ENCODE measurements at regions of chr9 and their contacts with region 1.

Region 1: GRCh38 chr9:131393622-131394463 is at the start of gene PRRC2B:
- DNase-seq: peak; percentile 87
- H3K4me3 Mint-ChIP-seq: peak within 1 kb of the TSS; percentile 89
- H3K27ac Mint-ChIP-seq: peak within 1 kb of the TSS; percentile 93
- H3K4me1 Mint-ChIP-seq: peaks cover 43% of the 10 kb centered on the region
- H3K27me3 Mint-ChIP-seq: no peaks in the 10 kb centered on the region
- total RNA-seq, gene PRRC2B: 157 to 171 TPM

Region 2: GRCh38 chr9:129796029-129796910 is 1597.6 kb before region 1 on chr9:
- CTCF ChIA-PET with region 1: no interaction called
- intact Hi-C with region 1: no loop called
- DNase-seq: no peak
- H3K4me3 Mint-ChIP-seq: no peak overlapping the region
- H3K27ac Mint-ChIP-seq: no peak overlapping the region
- H3K4me1 Mint-ChIP-seq: no peaks in the 10 kb centered on the region
- H3K27me3 Mint-ChIP-seq: no peaks in the 10 kb centered on the region

Region 3: DNA sequence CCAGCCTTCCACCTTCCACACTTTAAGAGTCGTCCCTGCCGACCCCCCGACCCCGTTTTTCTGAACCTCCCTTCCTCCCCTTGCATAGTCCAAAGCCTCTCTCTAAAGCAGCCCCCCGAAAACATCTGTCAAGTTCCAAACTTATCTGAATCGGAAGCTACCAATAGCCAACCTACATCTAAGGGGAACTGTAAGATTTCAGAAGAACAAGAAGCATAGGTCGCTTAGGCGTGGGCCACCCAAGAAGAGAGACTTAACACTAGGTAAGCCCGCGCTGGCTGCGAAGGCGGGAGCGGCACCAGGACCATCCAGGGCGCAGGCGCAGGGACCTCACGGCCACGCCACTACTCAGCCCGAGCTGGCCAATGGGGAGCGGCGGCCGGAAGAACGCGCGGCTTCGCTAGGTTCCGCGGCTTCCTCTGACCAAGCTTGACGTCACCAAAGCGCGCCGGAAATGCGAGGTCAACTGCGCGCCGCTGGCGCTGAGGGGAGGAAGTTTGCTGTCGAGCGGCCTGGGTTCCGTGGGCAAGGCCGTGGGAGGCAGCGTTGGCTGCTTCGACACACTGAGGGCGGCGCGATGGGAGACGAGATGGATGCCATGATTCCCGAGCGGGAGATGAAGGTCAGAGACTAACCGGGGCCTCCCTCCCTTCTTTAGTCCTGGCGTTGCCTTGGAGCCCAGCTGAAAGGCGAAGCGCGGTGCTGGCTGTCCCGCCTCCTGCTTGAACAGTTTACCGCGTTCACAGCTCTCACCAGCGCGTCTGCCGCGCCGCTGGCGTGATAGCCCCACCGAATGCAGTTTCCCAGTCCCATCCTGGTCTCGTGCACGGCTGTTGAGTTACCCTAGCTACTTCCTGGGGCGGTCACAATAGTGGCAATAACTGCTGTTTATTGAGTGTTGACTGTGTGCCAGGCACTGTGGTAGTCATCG is 268.4 kb before region 1 on chr9 and contains the start of gene NUP214:
- CTCF ChIA-PET with region 1: no interaction called
- intact Hi-C with region 1: loop called (anchors 5 kb)
- DNase-seq: peak; percentile 100
- H3K4me3 Mint-ChIP-seq: peak within 1 kb of the TSS; percentile 96
- H3K27ac Mint-ChIP-seq: peak within 1 kb of the TSS; percentile 92
- H3K4me1 Mint-ChIP-seq: peaks cover 32% of the 10 kb centered on the region
- H3K27me3 Mint-ChIP-seq: no peaks in the 10 kb centered on the region
- total RNA-seq, gene NUP214: 40.2 to 41.1 TPM

Region 4: DNA sequence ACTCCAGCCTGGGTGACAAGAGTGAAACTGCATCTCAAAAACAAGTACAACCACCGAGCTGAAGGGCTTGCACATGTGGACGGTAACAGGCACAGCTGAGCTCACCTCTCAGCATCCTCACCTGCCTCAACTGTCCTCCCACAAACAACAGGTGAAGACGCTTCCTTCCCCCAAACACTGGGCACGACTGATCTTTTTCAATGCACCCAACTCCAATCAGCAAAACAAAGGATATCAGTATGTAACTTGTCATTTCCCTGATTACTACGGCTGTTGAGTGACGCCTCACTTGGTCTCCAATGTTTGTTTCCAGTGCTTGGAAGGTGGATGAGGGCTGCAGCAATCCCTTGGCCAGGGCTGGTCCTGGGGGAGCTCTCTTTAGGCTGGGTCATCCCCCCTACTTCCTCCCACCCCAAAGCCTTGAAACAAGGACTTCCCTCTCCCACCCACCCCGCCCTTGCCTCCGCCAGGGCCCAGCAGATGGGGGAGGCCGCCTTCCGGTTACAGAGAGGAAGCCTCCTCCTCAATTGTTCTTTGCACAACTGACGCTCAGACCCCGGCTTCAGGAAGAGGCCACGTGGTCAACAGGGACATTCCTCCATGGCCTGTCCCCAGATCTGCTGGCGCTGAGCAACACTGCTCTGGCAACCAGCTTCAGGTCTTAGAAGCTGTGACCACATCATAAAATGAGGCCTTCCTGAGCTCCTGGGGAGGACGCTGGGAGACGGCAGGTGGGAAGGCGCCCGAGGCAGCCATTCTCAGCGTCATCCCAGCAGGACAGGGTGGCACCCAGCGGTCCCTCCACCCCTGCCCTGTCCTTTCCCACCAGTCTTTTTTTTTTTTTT is 123.5 kb before region 1 on chr9:
- CTCF ChIA-PET with region 1: no interaction called
- intact Hi-C with region 1: loop called (anchors 5 kb)
- DNase-seq: peak; percentile 81
- H3K4me3 Mint-ChIP-seq: peak overlapping the region; percentile 96
- H3K27ac Mint-ChIP-seq: peak overlapping the region; percentile 99
- H3K4me1 Mint-ChIP-seq: peaks cover 56% of the 10 kb centered on the region
- H3K27me3 Mint-ChIP-seq: no peaks in the 10 kb centered on the region

Region 5: DNA sequence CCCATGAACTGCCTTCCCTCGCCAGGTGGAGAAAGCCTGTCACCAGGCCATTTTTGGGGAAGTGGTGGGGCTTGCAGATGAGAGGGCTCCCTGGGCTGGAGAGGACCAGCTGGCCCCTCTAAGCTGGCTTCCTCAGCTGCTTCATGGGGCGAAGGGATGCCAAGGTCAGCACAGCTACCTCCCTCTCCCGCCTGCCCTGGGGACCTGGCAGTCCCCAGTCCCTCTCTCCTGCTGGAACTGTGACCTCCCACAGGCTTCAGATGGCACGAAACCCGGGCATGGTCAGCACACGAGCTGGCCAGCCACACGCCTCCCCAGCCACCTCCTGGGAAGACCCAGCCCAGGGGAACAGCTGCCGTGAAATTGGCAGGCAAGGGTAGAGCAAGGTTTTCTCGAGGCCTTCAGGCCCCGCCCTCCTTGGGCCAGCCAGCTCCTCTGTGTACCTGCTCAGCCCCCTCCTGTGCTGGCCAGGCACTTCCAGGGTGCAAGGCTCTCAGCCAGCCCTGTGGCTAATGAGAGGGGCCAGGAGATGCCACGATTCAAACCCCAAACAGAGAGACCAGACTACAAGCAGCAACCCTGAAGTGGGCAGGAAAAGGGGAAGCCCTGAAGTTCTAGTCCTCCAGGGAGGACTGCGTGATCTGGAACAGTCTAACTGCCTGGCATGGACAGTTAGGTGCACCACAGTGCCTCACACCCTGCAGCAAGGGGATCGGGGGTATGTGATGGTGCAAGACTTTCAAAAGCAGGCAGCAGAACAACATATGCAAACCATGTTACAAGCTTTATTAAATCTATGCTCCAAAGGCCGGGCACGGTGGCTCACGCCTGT is 91.4 kb before region 1 on chr9:
- CTCF ChIA-PET with region 1: no interaction called
- intact Hi-C with region 1: no loop called
- DNase-seq: no peak
- H3K4me3 Mint-ChIP-seq: no peak overlapping the region
- H3K27ac Mint-ChIP-seq: no peak overlapping the region
- H3K4me1 Mint-ChIP-seq: no peaks in the 10 kb centered on the region
- H3K27me3 Mint-ChIP-seq: no peaks in the 10 kb centered on the region

Region 6: GRCh38 chr9:131468038-131468437 is 74.2 kb after region 1 on chr9:
- CTCF ChIA-PET with region 1: no interaction called
- intact Hi-C with region 1: no loop called
- DNase-seq: no peak
- H3K4me3 Mint-ChIP-seq: no peak overlapping the region
- H3K27ac Mint-ChIP-seq: no peak overlapping the region
- H3K4me1 Mint-ChIP-seq: no peaks in the 10 kb centered on the region
- H3K27me3 Mint-ChIP-seq: no peaks in the 10 kb centered on the region

Region 7: DNA sequence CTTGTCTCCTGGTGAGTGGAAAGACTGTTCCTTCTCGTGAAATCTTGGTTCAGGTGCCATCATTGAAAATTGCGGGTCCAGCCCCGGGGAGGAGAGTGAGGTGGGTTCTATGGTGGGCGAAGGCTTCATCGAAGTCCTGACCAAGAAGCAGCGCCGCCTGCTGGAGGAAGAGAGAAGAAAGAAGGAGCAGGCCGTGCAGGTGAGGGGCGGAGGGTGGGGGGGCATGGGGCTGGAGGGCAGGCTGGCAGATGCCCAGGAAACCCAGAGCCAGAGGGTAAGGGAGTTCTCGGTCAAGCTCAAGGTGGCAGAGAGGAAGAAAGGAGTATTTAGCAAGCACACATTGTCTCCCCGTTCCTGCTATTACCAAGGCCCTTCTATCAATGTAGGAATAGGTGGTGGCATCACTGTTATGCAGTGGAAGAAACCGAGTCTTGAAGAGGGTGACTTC is 84.6 kb after region 1 on chr9:
- CTCF ChIA-PET with region 1: interaction called, 3 read pairs
- intact Hi-C with region 1: loop called (anchors 2 kb)
- DNase-seq: peak; percentile 66
- H3K4me3 Mint-ChIP-seq: no peak overlapping the region
- H3K27ac Mint-ChIP-seq: no peak overlapping the region
- H3K4me1 Mint-ChIP-seq: peaks cover 7% of the 10 kb centered on the region
- H3K27me3 Mint-ChIP-seq: no peaks in the 10 kb centered on the region

Region 8: DNA sequence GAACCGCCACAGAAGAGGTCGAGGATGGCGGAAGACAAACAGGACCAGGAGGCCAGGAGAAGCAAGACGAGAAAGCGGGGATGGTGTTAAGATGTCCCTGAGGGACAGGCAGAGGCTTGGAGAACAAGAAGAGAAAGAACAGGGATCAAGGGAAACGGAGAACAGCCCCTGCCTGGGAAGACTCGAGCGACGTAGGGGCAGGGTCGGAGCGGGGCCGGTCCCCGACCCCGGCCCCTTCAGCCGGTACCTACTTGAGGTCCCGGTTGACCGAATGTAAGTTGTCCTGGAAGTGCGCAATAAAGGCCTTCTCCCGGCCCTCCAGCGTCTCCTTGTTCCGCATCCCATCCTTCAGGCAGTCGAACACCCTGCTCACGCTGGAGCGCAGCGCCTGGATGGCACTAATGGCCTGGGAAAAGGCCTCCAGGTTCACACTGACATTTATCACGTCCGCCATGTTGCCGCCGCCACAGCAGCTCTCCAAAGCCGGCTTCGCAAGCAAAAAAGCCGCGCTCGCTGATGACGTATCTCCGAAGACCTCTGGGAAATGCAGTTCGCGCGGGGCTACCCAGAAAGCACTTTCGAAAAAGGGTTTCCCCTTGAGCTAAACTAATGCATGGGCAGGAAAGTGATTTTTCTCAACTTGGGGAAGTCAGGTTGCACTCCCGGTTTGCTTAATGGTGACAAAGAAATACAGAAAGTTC is 685.7 kb after region 1 on chr9 and contains the start of gene MED27:
- CTCF ChIA-PET with region 1: no interaction called
- intact Hi-C with region 1: loop called (anchors 10 kb)
- DNase-seq: peak; percentile 99
- H3K4me3 Mint-ChIP-seq: peak within 1 kb of the TSS; percentile 86
- H3K27ac Mint-ChIP-seq: peak within 1 kb of the TSS; percentile 74
- H3K4me1 Mint-ChIP-seq: peaks cover 45% of the 10 kb centered on the region
- H3K27me3 Mint-ChIP-seq: no peaks in the 10 kb centered on the region
- total RNA-seq, gene MED27: 27.7 to 31.3 TPM